ENCODE measurements at regions of chr6 and their contacts with region 1.

Region 1: DNA sequence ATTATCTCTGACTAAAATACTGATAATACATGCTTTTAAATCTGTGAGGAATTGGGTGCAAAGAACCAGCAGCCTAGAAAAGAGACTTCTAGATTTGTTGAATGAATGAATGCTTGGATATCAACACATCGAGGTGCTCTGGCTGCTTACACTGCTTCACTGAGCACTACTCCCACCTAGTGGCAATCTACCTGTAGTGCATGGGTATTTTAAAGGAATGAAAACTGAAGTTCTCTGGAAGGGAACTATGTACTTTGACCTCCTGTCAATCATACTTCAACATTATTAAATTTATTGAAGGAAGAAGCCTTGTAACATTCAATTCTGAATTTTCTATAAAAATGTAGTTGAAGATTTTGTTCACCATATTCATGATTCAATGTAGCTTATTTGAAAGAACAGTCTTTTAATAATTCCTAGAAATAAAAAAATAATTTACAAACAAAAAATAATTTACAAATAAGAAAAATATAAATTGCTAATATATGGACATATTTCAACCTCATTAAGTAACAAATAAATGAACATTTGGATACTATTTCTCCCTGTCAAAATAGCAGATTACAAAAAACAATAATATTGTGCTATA is 111.2 kb upstream of the MMS22L start:
- DNase-seq: no peak
- H3K4me3 ChIP-seq: no peak overlapping the region
- H3K27ac ChIP-seq: no peak overlapping the region
- H3K4me1 ChIP-seq: no peaks in the 10 kb centered on the region
- H3K27me3 ChIP-seq: no peaks in the 10 kb centered on the region
- CTCF ChIP-seq: peak; percentile 96

Region 2: DNA sequence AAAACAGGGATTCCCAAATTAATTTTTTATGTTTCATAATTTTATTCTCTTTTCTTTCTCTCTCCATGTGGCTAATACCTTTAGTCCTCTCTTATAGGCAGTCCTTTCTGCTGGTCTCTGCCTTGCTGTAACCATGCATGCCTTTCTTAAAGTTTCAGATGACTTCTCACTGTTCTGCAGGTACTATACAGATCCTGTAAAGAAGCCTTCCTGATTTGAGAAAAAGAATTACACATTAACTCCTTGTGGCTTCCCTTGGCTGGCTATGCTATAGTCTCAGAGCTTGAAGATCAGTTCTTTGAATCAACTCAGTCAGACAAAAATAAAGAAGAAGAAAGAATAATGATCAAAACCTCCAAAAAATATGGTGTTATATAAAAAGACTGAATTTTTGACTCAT is 549.7 kb before region 1 on chr6:
- intact Hi-C with region 1: no loop called
- DNase-seq: no peak
- H3K4me3 ChIP-seq: no peak overlapping the region
- H3K27ac ChIP-seq: no peak overlapping the region
- H3K4me1 ChIP-seq: no peaks in the 10 kb centered on the region
- H3K27me3 ChIP-seq: no peaks in the 10 kb centered on the region
- CTCF ChIP-seq: no peak

Region 3: GRCh38 chr6:97186416-97186999 is 207.7 kb before region 1 on chr6:
- intact Hi-C with region 1: loop called (anchors 5 kb)
- DNase-seq: peak; percentile 31
- H3K4me3 ChIP-seq: no peak overlapping the region
- H3K27ac ChIP-seq: no peak overlapping the region
- H3K4me1 ChIP-seq: peaks cover 11% of the 10 kb centered on the region
- H3K27me3 ChIP-seq: no peaks in the 10 kb centered on the region
- CTCF ChIP-seq: peak; percentile 91

Region 4: GRCh38 chr6:97262676-97263075 is 131.6 kb before region 1 on chr6:
- intact Hi-C with region 1: no loop called
- DNase-seq: no peak
- H3K4me3 ChIP-seq: no peak overlapping the region
- H3K27ac ChIP-seq: no peak overlapping the region
- H3K4me1 ChIP-seq: no peaks in the 10 kb centered on the region
- H3K27me3 ChIP-seq: no peaks in the 10 kb centered on the region
- CTCF ChIP-seq: no peak